Activated naive CD4-positive, alpha-beta T cell treated with anti-CD3 and anti-CD28 coated beads, Interleukin-2, amount 10 ng/mL, durations not matched to agents 7 days and 5 days (primary cell): ENCODE measurements at regions of chr9 and their contacts with region 1.

Region 1: DNA sequence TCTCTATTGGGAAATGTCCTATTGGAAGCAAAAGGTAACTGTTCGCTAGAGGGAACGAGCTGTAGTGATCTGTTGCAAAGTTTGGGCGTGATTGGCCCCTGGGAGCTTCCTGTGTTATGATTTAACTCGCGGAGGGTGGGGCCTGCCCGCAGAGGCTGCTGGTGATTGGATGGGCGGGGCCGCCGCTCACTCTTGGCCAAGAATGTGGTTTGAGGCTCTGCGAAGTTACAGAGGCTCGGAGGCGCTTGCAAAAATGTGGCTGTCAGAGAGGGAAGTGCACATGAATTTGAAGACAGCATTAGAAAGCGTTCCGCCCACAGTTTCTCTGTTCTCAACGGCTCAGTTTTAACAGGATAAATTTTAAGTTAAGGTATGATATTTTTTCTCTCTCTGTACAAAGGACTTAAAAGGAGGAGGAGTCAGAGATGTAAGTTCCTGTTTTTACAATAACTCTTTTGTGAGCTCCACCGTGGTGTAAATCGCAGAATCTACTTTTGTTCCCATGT is 46.9 kb downstream of the CNTRL start:
- DNase-seq: peak; percentile 99
- H3K4me3 Mint-ChIP-seq: peak overlapping the region; percentile 86
- H3K27ac Mint-ChIP-seq: peak overlapping the region; percentile 95
- H3K4me1 Mint-ChIP-seq: peaks cover 53% of the 10 kb centered on the region
- H3K27me3 Mint-ChIP-seq: no peaks in the 10 kb centered on the region

Region 2: DNA sequence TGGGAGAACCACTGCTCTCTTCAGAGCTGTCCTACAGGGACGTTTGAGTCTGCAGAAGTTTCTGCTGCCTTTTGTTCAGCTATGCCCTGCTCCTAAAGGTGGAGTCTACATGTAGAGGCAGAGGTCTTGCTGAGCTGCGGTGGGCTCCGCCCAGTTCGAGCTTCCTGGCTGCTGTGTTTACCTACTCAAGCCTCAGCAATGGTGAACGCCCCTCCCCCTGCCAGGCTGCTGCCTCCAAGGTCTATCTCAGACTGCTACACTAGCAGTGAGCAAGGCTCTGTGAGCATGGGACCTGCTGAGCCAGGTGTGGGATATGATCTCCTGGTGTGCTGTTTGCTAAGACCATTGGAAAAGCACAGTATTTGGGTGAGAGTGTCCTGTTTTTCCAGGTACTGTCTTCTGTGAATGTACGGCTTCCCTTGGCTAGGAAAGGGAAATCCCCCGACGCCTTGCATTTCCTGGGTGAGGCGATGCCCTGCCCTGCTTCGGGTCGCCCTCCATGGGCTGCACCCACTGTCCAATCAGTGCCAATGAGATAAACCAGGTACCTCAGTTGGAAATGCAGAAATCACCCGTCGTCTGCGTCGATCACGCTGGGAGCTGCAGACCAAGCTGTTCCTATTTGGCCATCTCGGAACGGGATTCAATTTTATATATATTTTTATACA is 11.6 kb after region 1 on chr9:
- CTCF ChIA-PET with region 1: interaction called, 12 read pairs
- DNase-seq: peak; percentile 94
- H3K4me3 Mint-ChIP-seq: peak overlapping the region; percentile 25
- H3K27ac Mint-ChIP-seq: peak overlapping the region; percentile 93
- H3K4me1 Mint-ChIP-seq: peaks cover 66% of the 10 kb centered on the region
- H3K27me3 Mint-ChIP-seq: no peaks in the 10 kb centered on the region